ENCODE measurements at regions of chr3 and their contacts with region 1.

Region 1: GRCh38 chr3:99808151-99808794 is 9.4 kb upstream of the CMSS1 start:
- DNase-seq: peak; percentile 51
- H3K4me3 ChIP-seq: no peak overlapping the region
- CTCF ChIP-seq: peak; percentile 85

Region 2: DNA sequence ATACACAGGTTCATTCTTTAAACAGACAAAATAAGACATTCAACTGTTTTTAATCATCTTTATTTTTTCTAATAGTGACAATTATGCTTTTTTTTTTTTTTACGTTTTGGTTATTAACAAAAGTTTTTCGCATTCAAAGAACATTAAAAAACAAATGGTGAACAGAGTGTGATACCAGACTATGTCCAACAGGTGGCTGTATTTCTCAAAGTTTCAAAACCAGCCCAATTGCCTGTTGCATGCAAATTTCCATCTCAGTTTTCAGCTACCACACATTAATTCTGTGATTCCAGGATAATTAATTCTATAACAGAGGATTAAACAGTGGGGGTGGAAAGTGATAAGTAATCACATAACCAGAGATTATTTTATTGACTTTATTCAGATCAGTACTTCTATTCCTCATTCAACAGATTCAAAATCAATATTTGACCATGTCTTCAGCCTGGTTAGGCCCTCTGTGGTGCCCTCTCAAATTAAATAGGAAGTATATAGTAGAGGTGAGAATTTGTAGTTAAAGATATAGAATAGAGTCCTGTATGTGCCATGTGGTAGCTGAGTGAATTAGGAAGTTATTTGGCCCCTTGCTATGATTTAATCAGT is 784.6 kb before region 1 on chr3:
- CTCF ChIA-PET with region 1: interaction called, 14 read pairs
- POLR2A ChIA-PET with region 1: no interaction called
- DNase-seq: no peak
- H3K4me3 ChIP-seq: no peak overlapping the region
- CTCF ChIP-seq: peak; percentile 52

Region 3: GRCh38 chr3:99520513-99520912 is 287.8 kb before region 1 on chr3:
- CTCF ChIA-PET with region 1: no interaction called
- POLR2A ChIA-PET with region 1: no interaction called
- DNase-seq: no peak
- H3K4me3 ChIP-seq: no peak overlapping the region
- CTCF ChIP-seq: no peak

Region 4: GRCh38 chr3:99795573-99795972 is 12.7 kb before region 1 on chr3:
- CTCF ChIA-PET with region 1: interaction called, 11 read pairs
- POLR2A ChIA-PET with region 1: no interaction called
- DNase-seq: no peak
- H3K4me3 ChIP-seq: no peak overlapping the region
- CTCF ChIP-seq: no peak